ENCODE measurements at regions of chr5 and their contacts with region 1.

Region 1: GRCh38 chr5:33781286-33781685 is 110.5 kb downstream of the ADAMTS12 start:
- DNase-seq: peak in 1 of 2 experiments; percentile 23
- H3K4me3 ChIP-seq: no peak overlapping the region
- H3K27ac ChIP-seq: no peak overlapping the region
- H3K4me1 ChIP-seq: no peaks in the 10 kb centered on the region
- H3K27me3 ChIP-seq: no peaks in the 10 kb centered on the region
- CTCF ChIP-seq: no peak

Region 2: GRCh38 chr5:35436410-35437057 is 1655.2 kb after region 1 on chr5:
- CTCF ChIA-PET with region 1: no interaction called
- POLR2A ChIA-PET with region 1: interaction called, 11 read pairs
- intact Hi-C with region 1: no loop called
- DNase-seq: no peak
- H3K4me3 ChIP-seq: no peak overlapping the region
- H3K27ac ChIP-seq: no peak overlapping the region
- H3K4me1 ChIP-seq: no peaks in the 10 kb centered on the region
- H3K27me3 ChIP-seq: peaks cover 21% of the 10 kb centered on the region
- CTCF ChIP-seq: peak; percentile 73